ENCODE measurements at regions of chr19 and their contacts with region 1.

Region 1: DNA sequence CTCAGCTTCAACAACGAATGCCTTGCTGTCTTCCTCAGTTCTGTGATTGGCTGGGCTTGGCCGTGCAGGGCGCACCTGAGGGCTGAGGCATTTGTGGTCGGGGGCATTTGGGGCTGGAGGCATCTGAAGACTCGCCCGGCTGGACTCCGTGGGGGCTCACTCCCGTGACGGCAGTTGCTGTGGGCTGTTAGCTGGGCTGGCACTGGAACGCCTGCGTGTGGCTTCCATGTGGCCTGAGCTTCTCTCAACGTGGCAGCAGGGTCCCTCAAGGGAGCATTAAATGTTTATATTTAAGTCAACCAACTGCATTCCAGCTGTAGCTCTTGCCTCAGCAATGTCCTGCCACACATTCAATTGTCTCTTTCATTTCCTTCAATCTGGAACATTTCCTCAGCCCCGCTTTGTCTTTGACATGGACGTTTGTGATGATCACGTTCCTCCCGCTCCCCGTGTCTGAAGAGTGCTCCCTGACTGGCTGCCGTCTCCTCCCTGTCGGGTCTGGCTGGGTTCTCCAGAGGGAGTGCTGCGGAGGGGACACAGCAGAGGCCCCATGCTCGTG is 21.0 kb downstream of the CCDC8 start:
- DNase-seq: no peak
- H3K4me3 ChIP-seq: no peak overlapping the region
- H3K27ac ChIP-seq: no peak overlapping the region
- H3K4me1 ChIP-seq: no peaks in the 10 kb centered on the region
- H3K27me3 ChIP-seq: no peaks in the 10 kb centered on the region
- CTCF ChIP-seq: no peak

Region 2: DNA sequence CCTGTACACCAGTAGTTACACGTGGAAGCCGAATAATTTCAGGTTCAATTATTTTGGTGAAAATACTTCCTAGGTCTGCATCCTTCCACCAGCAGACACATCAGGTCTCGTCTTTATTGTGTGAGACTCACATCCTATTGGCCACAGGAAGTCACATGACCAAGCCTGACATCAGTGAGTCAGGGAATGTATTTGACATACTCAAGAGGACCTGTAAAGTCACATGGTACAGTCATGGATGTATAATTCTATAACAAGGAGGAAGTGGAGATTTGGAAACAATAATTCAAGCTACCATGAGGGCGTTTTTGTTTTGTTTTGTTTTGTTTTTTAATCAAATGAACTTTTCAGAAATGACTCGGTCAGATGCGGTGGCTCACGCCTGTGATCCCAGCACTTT is 104.7 kb before region 1 on chr19:
- CTCF ChIA-PET with region 1: interaction called, 6 read pairs
- POLR2A ChIA-PET with region 1: no interaction called
- intact Hi-C with region 1: loop called (anchors 1 kb)
- DNase-seq: peak in 1 of 2 experiments; percentile 43
- H3K4me3 ChIP-seq: no peak overlapping the region
- H3K27ac ChIP-seq: no peak overlapping the region
- H3K4me1 ChIP-seq: peaks cover 12% of the 10 kb centered on the region; the same call in 1 of the 2 replicates
- H3K27me3 ChIP-seq: peaks cover 7% of the 10 kb centered on the region; the same call in 1 of the 2 replicates
- CTCF ChIP-seq: no peak